ENCODE measurements at regions of chr3 and their contacts with region 1.

Region 1: DNA sequence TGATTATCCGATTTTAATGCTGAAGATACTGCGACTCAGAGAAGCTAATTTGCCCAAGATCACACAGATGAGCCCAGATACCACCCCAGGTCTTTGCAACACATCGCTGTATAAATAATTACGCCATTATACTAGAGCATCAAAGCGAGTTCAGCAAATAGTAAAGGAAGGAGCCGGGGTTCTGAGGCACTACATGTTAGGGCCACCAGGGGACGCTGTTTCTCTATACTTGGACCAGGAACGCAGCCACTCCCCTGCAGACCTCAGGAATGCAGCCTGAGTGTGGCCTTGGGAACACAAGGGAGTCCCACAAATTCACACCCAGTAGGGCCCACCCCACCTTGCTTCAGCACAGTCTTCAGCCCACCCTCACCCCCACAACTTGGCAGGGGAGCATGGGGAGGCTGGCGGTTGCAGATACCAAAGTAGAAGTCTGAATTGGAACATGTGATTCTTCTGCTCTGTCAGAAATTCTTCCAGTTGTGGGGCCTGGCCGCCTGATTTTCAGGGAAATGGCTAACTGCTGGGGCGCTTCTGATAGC is 57.8 kb upstream of the RYK start:
- DNase-seq: peak; percentile 83
- H3K4me3 Mint-ChIP-seq: no peak overlapping the region
- H3K27ac Mint-ChIP-seq: peak overlapping the region; percentile 57
- H3K4me1 Mint-ChIP-seq: peaks cover 32% of the 10 kb centered on the region
- H3K27me3 Mint-ChIP-seq: no peaks in the 10 kb centered on the region
- CTCF ChIP-seq: peak; percentile 97

Region 2: GRCh38 chr3:134222835-134223234 is 85.6 kb before region 1 on chr3:
- CTCF ChIA-PET with region 1: interaction called, 16 read pairs
- POLR2A ChIA-PET with region 1: no interaction called
- intact Hi-C with region 1: no loop called
- DNase-seq: no peak
- H3K4me3 Mint-ChIP-seq: no peak overlapping the region
- H3K27ac Mint-ChIP-seq: no peak overlapping the region
- H3K4me1 Mint-ChIP-seq: peaks cover 14% of the 10 kb centered on the region
- H3K27me3 Mint-ChIP-seq: no peaks in the 10 kb centered on the region
- CTCF ChIP-seq: no peak

Region 3: DNA sequence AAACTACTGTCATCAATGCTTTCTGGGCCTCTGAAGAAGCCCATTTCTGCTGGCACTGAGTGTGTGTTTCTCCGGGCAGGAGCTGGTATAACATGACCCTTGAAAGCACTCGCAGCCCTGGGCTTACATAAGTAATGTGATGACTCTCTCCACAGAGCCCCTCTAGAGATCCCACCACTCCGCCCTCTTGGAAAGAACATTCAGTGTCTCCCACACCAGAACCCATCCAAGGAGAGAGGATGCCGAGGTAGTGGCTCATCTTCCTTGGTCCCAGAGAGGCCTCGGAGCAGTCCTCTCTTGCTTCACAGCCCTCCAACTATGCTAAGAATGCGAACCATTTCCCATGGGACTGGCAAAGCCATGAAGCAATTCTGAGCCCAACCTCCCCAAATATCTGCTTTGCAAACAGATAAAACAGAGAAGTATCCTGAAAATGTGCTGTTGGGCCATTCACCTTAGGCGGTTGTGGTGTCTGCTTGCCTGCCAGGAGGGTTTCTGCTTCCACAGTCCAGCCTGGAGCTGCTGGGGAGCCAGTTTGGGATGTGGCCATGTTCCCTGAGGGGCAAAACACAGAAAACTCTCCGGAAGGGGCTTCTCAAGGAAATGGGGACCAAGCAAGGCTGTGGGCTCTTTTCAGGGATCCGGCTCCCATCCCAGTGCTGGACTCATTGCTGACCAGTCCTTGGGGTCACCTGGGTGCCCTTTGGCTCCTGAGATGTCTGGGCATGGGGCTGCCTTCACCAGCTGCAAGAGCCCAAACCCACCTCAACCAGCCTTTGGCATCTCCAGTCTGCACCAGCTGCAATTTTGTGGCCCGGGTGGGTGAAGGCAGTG is 18.6 kb after region 1 on chr3:
- CTCF ChIA-PET with region 1: interaction called, 23 read pairs
- POLR2A ChIA-PET with region 1: interaction called, 15 read pairs
- intact Hi-C with region 1: loop called (anchors 2 kb)
- DNase-seq: peak; percentile 96
- H3K4me3 Mint-ChIP-seq: peak overlapping the region; percentile 50
- H3K27ac Mint-ChIP-seq: peak overlapping the region; percentile 52
- H3K4me1 Mint-ChIP-seq: peaks cover 72% of the 10 kb centered on the region
- H3K27me3 Mint-ChIP-seq: no peaks in the 10 kb centered on the region
- CTCF ChIP-seq: no peak

Region 4: DNA sequence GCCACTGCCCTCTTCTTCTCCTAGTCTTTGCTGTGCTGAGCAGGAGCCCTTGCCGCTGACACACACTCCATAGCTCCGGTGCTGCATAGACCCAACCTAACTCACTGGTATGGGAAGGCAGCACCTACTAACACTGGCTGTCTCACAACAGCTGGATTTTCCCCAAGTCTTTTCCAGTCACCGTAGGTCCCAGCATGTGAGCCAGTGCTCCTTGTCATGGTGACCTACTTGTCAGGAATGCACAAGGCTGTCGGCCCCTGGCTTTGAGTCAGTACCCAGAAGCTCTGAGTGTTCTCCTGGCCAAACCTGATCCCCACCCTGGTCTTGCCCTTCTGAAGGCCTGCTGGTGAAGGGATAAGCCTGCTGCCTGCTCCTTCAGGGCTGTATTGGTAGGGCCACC is 40.1 kb after region 1 on chr3:
- CTCF ChIA-PET with region 1: interaction called, 29 read pairs
- POLR2A ChIA-PET with region 1: interaction called, 19 read pairs
- intact Hi-C with region 1: no loop called
- DNase-seq: peak; percentile 56
- H3K4me3 Mint-ChIP-seq: no peak overlapping the region
- H3K27ac Mint-ChIP-seq: peak overlapping the region; percentile 77
- H3K4me1 Mint-ChIP-seq: peaks cover 39% of the 10 kb centered on the region
- H3K27me3 Mint-ChIP-seq: no peaks in the 10 kb centered on the region
- CTCF ChIP-seq: no peak

Region 5: DNA sequence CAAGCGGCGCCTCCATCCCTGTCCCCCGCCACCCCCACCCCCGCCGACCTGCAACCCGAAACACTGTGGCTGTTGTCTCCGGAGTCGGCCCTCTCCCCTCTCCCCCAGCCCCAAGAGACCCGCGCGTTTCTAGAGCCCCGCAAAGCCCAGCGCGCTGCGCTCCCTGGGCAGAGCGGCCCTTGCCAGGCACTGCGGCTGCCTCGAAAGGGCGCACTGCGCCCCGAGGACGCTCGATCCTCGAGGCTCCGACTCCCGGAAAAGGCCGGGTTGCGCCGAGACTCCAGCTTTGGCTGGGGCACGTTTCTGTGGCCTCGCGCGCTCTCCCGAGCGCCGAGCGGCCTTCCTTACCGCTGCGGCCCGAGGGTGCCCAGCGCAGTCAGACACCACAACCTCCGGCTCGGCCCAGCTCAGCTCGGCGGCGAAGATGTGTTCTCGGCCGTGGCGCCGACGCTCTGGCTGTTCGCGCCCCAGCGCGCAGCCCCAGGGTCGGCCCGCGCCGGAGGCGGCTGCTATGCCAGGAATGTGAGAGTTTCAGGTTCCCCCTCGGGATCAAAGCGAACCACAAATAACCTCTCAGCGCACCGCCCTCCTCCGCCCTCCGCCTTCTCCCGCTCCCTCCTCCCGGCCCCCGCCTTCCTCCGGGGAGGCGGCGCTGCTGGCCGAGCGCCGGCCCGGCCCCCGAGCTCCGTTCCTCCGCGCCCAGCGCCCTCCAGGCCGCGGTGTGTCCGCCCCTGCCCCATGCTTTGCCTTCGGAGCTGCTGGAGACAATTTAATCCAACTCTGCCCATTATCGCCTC is 65.8 kb after region 1 on chr3 and contains the start of gene AMOTL2:
- CTCF ChIA-PET with region 1: interaction called, 46 read pairs
- POLR2A ChIA-PET with region 1: interaction called, 34 read pairs
- intact Hi-C with region 1: loop called (anchors 1 kb)
- DNase-seq: peak; percentile 93
- H3K4me3 Mint-ChIP-seq: peak within 1 kb of the TSS; percentile 93
- H3K27ac Mint-ChIP-seq: peak within 1 kb of the TSS; percentile 88
- H3K4me1 Mint-ChIP-seq: peaks cover 48% of the 10 kb centered on the region
- H3K27me3 Mint-ChIP-seq: no peaks in the 10 kb centered on the region
- CTCF ChIP-seq: no peak
- total RNA-seq, gene AMOTL2: 92.6 and 137 TPM in 2 replicates

Region 6: GRCh38 chr3:134485718-134486576 is 177.5 kb after region 1 on chr3 and contains the starts of genes ANAPC13 and CEP63:
- CTCF ChIA-PET with region 1: interaction called, 444 read pairs
- POLR2A ChIA-PET with region 1: interaction called, 8 read pairs
- intact Hi-C with region 1: no loop called
- DNase-seq: peak; percentile 98
- H3K4me3 Mint-ChIP-seq: peak within 1 kb of the TSS; percentile 75
- H3K27ac Mint-ChIP-seq: peak within 1 kb of the TSS; percentile 87
- H3K4me1 Mint-ChIP-seq: peaks cover 31% of the 10 kb centered on the region
- H3K27me3 Mint-ChIP-seq: no peaks in the 10 kb centered on the region
- CTCF ChIP-seq: no peak
- total RNA-seq, gene ANAPC13: 61.5 and 78.4 TPM in 2 replicates
- total RNA-seq, gene CEP63: 37.0 and 40.0 TPM in 2 replicates